Common myeloid progenitor, CD34-positive (primary cell): ENCODE measurements at regions of chr1 and their contacts with region 1.

Region 1: DNA sequence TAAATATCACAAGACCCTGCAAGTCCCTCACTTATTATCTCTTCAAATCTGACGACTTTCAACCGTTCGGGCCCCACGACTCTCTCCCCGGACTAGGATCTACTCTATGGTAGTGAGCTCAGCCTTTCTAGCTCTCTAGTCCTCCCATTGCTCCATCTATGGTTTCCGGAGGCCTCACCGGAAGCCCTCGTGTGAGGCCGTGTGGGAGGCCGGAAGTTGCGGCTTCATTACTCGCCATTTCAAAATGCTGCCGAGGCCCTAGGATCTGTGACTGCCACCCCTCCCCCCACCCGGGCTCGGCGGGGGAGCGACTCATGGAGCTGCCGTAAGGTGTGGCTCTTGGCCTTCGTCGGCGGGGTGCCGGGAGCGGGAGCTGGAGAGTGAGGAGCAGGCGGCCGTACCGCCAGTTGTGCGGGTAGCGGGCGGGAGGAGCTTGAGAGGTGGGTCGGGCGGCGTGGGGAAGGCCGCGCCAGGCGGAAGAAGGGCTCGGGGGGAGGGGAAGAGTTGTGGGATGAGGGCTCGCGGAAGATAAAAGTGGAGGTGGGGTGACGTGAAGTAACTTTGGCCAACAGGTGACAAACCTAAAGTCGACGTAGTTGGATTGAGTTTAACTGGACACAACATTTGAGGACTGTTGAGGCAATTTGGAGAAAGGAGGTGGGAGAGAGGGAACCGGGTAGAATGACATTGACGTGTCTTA is at the start of gene MDM4:
- DNase-seq: peak; percentile 99
- H3K4me3 ChIP-seq: peak within 1 kb of the TSS; percentile 68 to 97 (median 85)
- H3K27ac ChIP-seq: peak within 1 kb of the TSS; percentile 95 to 98
- H3K4me1 ChIP-seq: peaks cover 21 to 78% (median 52%) of the 10 kb centered on the region in 4 experiments
- H3K27me3 ChIP-seq: no peaks in the 10 kb centered on the region

Region 2: DNA sequence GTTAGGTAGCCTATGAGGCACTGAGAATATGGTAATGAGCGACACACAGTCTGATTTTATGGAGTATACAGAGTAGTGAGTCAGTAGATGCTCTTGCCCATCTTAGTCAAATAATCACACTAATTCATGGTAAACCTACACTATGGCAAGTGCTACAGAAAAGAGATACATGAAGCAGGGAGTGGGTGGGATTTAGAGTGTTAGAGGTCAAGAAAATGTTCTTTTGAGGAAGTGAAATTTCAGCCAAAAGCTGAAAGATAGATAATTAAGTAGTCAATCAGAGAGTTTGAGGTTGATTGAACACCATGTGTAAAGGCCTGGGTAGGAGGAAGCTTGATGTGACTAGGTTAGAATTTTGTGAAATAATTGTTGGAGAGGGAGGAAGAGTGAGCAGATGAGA is 14.6 kb after region 1 on chr1:
- CTCF ChIA-PET with region 1: interaction called, 26 read pairs
- POLR2A ChIA-PET with region 1: interaction called, 4 read pairs
- DNase-seq: no peak
- H3K4me3 ChIP-seq: no peak overlapping the region
- H3K27ac ChIP-seq: no peak overlapping the region
- H3K4me1 ChIP-seq: no peaks in the 10 kb centered on the region
- H3K27me3 ChIP-seq: no peaks in the 10 kb centered on the region

Region 3: GRCh38 chr1:204623894-204624361 is 107.6 kb after region 1 on chr1:
- CTCF ChIA-PET with region 1: no interaction called
- POLR2A ChIA-PET with region 1: no interaction called
- DNase-seq: peak; percentile 17 to 54 (median 47)
- H3K4me3 ChIP-seq: no peak overlapping the region
- H3K27ac ChIP-seq: no peak overlapping the region
- H3K4me1 ChIP-seq: no peaks in the 10 kb centered on the region
- H3K27me3 ChIP-seq: peaks cover 0 to 3% (median 0%) of the 10 kb centered on the region in 5 experiments

Region 4: GRCh38 chr1:204746838-204747442 is 230.6 kb after region 1 on chr1:
- CTCF ChIA-PET with region 1: no interaction called
- POLR2A ChIA-PET with region 1: no interaction called
- DNase-seq: peak; percentile 25 to 65 (median 59)
- H3K4me3 ChIP-seq: no peak overlapping the region
- H3K27ac ChIP-seq: no peak overlapping the region
- H3K4me1 ChIP-seq: no peaks in the 10 kb centered on the region
- H3K27me3 ChIP-seq: peaks cover 0 to 10% (median 0%) of the 10 kb centered on the region in 5 experiments